GM13977 (cell line): ENCODE measurements at regions of chr6 and their contacts with region 1.

Region 1: DNA sequence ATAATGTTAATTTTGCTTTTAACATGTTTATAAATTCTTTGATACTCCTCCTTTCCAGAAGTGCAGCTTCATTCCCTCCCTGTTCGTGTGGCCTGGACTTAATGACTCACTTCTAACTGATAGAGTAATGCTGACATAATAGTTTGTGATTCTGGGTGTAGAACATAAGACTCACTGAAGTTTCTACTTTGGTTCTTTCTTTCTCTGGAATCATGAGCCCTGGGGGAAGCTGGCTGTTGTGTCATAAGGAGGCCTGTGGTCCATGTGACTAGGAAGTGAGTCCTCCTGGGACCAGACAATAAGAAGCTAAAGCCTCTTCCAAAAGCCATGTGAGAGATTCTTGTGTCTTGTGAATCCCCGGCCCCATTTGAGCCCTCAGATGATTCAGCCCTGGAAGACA is 30.5 kb upstream of the HLA-G start:
- DNase-seq: no peak
- CTCF ChIP-seq: no peak

Region 2: DNA sequence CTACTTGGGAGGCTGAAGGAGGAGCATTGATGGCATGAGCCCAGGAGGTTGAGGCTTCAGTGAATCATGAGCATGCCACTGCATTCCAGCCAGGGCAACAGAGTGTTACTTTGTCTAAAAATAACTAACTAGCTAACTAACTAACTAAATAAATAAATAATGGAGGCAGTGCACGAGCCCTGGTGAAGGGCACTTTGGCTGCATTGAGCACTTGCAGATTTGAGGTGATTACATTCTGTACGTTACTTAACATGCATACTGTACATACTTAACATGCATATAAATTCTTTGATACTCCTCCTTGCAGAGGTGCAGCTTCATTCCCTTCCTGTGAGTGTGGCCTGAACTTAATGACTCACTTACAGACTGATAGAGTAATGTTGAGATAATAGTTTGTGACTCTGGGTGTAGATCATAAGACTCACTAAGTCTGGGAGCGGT is 155.9 kb after region 1 on chr6:
- in situ Hi-C with region 1: loop called (anchors 5 kb)
- DNase-seq: no peak
- CTCF ChIP-seq: no peak